Ovary (tissue), 10 donors: ENCODE measurements at regions of chr12 and their contacts with region 1.

Region 1: DNA sequence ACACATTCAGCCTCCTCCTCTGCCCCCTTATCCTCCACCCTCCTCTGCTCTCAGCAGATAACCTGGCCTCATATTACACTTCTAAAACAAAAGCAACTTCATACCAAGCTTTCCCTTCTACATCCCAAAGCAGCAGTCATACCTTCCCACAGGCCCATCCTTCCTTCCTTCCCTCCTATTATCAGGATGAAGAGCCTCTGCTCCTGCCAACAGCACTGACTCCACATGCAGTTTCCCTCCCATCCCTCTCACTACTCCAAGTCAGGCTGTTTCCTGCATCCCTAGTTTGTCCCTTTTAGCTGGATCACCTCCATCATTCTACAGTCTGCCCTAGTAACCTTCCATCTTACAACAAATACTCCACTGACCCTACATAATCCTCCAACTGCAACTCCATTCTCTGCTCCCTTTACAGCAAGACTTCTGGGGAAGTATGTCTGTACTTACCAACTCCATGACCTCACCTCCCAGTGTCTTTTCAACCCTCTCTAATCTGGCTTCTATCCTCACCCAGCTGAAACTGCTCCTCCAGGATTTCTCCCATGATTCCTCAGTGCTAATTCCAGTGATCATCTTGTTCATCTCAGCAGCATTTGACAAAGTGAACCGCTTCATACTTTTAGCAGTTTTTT is 4.9 kb upstream of the YEATS4 start:
- DNase-seq: no peak
- H3K4me3 ChIP-seq: no peak overlapping the region
- H3K27ac ChIP-seq: no peak overlapping the region
- H3K4me1 ChIP-seq: no peaks in the 10 kb centered on the region
- H3K27me3 ChIP-seq: no peaks in the 10 kb centered on the region
- CTCF ChIP-seq: no peak
- EP300 ChIP-seq: no peak
- POLR2A ChIP-seq: no peak

Region 2: GRCh38 chr12:69405466-69405865 is 50.8 kb after region 1 on chr12:
- intact Hi-C with region 1: no loop called
- DNase-seq: peak in 2 of 5 donors; percentile 15 to 25
- H3K4me3 ChIP-seq: no peak overlapping the region
- H3K27ac ChIP-seq: no peak overlapping the region
- H3K4me1 ChIP-seq: no peaks in the 10 kb centered on the region
- H3K27me3 ChIP-seq: no peaks in the 10 kb centered on the region
- CTCF ChIP-seq: no peak
- EP300 ChIP-seq: no peak
- POLR2A ChIP-seq: no peak

Region 3: GRCh38 chr12:69585189-69586062 is 230.8 kb after region 1 on chr12 and contains the start of gene CCT2:
- intact Hi-C with region 1: loop called in 1 of 4 experiments (anchors 5 kb)
- DNase-seq: peak; percentile 96 to 99 (median 97)
- H3K4me3 ChIP-seq: peak within 1 kb of the TSS; percentile 65
- H3K27ac ChIP-seq: peak within 1 kb of the TSS; percentile 45 to 80
- H3K4me1 ChIP-seq: peaks cover 3% of the 10 kb centered on the region
- H3K27me3 ChIP-seq: no peaks in the 10 kb centered on the region
- CTCF ChIP-seq: no peak
- EP300 ChIP-seq: no peak
- POLR2A ChIP-seq: peak; percentile 82
- total RNA-seq, gene CCT2: 86.0 to 141 (median 109) TPM